ENCODE measurements at regions of chr15 and their contacts with region 1.

Region 1: GRCh38 chr15:92059056-92059960 is 205.8 kb downstream of the SLCO3A1 start:
- DNase-seq: no peak
- H3K4me3 ChIP-seq: no peak overlapping the region
- H3K27ac ChIP-seq: no peak overlapping the region
- H3K4me1 ChIP-seq: peaks cover 1% of the 10 kb centered on the region
- H3K27me3 ChIP-seq: no peaks in the 10 kb centered on the region
- CTCF ChIP-seq: no peak
- EP300 ChIP-seq: no peak
- POLR2A ChIP-seq: no peak

Region 2: GRCh38 chr15:92018535-92019239 is 40.6 kb before region 1 on chr15:
- intact Hi-C with region 1: loop called in 1 of 4 experiments (anchors 5 kb)
- DNase-seq: no peak
- H3K4me3 ChIP-seq: no peak overlapping the region
- H3K27ac ChIP-seq: no peak overlapping the region
- H3K4me1 ChIP-seq: peaks cover 5% of the 10 kb centered on the region
- H3K27me3 ChIP-seq: no peaks in the 10 kb centered on the region
- CTCF ChIP-seq: no peak
- EP300 ChIP-seq: no peak
- POLR2A ChIP-seq: no peak

Measured in ovary (tissue), 10 donors.